CD4-positive, alpha-beta memory T cell (primary cell): ENCODE measurements at regions of chr2 and their contacts with region 1.

Region 1: DNA sequence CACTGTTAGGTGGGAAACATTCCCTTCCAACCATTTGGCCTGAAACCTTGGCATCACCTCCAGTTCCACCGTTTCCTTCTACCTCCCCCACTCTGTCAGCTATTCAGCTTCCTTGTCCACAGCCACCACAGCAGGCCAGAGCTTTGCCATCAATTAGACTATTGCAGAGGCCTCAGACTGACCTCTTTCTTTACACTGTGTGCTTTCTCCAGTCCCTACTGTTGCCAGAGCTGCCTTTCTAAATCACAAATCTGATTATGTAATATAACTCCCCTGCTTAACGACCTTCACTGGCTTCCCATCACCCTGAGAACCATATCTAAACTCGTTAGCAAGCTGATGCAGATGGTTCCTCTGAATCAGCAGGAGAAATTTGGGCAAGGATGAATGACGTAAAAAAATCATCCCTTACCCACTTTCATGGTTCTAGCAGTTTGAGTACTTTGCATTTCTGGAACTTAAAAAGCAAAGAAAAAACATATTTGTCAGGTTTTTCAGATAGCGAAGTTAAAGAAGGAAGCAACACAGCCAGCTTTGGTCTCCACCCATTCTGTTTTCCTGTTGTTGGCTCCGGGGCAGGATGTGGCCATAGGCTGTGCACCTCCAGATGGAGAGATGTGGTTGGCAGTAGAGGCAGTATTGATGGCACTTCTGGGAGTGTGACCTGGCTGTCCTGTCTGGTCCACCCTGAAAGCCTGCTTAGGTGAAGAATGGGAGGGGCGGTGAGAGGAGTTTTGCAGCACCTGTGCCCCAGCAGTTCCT is 422.1 kb downstream of the PARD3B start:
- DNase-seq: peak; percentile 64 to 78 (median 73)
- H3K4me3 ChIP-seq: peak overlapping the region in 1 of 2 donors; percentile 6
- H3K4me3 Mint-ChIP-seq: peak overlapping the region; percentile 12 to 86 (median 72)
- H3K27ac ChIP-seq: peak overlapping the region; percentile 48
- H3K27ac Mint-ChIP-seq: peak overlapping the region; percentile 83 to 100 (median 95)
- H3K4me1 ChIP-seq: peaks cover 72% of the 10 kb centered on the region
- H3K4me1 Mint-ChIP-seq: peaks cover 41 to 67% (median 57%) of the 10 kb centered on the region in 4 donors
- H3K27me3 ChIP-seq: no peaks in the 10 kb centered on the region
- H3K27me3 Mint-ChIP-seq: no peaks in the 10 kb centered on the region

Region 2: GRCh38 chr2:204885747-204886146 is 81.6 kb before region 1 on chr2:
- CTCF ChIA-PET with region 1: interaction called, 8 read pairs
- POLR2A ChIA-PET with region 1: interaction called, 41 read pairs
- intact Hi-C with region 1: loop called (anchors 2 kb)
- DNase-seq: no peak
- H3K4me3 ChIP-seq: no peak overlapping the region
- H3K4me3 Mint-ChIP-seq: no peak overlapping the region
- H3K27ac ChIP-seq: no peak overlapping the region
- H3K27ac Mint-ChIP-seq: peak overlapping the region in 1 of 7 donors; percentile 6
- H3K4me1 ChIP-seq: peaks cover 22% of the 10 kb centered on the region
- H3K4me1 Mint-ChIP-seq: peaks cover 17 to 43% (median 23%) of the 10 kb centered on the region in 4 donors
- H3K27me3 ChIP-seq: no peaks in the 10 kb centered on the region
- H3K27me3 Mint-ChIP-seq: no peaks in the 10 kb centered on the region

Region 3: DNA sequence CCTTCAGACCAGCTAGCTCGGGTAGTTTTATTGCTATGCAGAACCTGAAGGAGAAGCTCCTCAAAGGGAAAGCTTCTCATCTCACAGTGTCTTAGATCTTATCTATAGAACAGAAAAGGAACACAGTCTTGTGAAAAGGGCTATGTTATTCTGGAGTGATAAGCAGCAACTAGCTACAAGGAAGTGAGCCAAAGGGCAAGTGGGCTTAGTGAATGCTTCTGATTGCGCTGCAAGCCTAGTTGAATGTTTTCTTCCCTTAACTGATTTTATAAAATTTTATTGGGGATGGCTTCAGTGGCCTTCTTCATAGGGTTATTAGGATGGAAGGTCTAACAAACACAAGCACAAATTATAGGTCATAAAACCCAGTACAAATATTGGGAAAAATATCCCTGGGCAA is 22.0 kb before region 1 on chr2:
- CTCF ChIA-PET with region 1: interaction called, 3 read pairs
- POLR2A ChIA-PET with region 1: interaction called, 16 read pairs
- intact Hi-C with region 1: loop called (anchors 2 kb)
- DNase-seq: no peak
- H3K4me3 ChIP-seq: no peak overlapping the region
- H3K4me3 Mint-ChIP-seq: no peak overlapping the region
- H3K27ac ChIP-seq: no peak overlapping the region
- H3K27ac Mint-ChIP-seq: peak overlapping the region in 1 of 7 donors; percentile 51
- H3K4me1 ChIP-seq: peaks cover 26% of the 10 kb centered on the region
- H3K4me1 Mint-ChIP-seq: peaks cover 28 to 53% (median 37%) of the 10 kb centered on the region in 4 donors
- H3K27me3 ChIP-seq: no peaks in the 10 kb centered on the region
- H3K27me3 Mint-ChIP-seq: no peaks in the 10 kb centered on the region

Region 4: DNA sequence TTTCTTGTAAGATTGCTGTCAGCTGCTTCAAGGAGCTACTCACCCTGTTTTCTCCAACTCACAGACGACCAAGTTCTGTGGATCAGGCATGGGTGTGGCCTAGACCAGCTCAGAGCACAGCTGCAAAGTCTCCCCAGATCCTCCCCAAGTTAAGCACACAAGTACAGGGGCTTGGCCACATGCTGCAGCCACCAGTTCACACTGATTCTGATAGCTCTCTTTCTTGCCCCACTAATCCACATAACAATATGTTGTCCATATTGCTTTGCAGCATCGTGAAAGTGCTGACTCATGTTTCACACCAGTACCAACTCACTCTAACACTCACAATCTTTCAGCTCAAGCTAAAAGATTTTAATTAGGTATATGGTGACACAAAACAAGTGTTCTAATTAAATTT is 14.9 kb after region 1 on chr2:
- CTCF ChIA-PET with region 1: interaction called, 4 read pairs
- POLR2A ChIA-PET with region 1: interaction called, 10 read pairs
- intact Hi-C with region 1: no loop called
- DNase-seq: no peak
- H3K4me3 ChIP-seq: no peak overlapping the region
- H3K4me3 Mint-ChIP-seq: peak overlapping the region in 2 of 8 donors; percentile 2 to 38
- H3K27ac ChIP-seq: no peak overlapping the region
- H3K27ac Mint-ChIP-seq: no peak overlapping the region
- H3K4me1 ChIP-seq: peaks cover 14% of the 10 kb centered on the region
- H3K4me1 Mint-ChIP-seq: peaks cover 10 to 20% (median 11%) of the 10 kb centered on the region in 4 donors
- H3K27me3 ChIP-seq: no peaks in the 10 kb centered on the region
- H3K27me3 Mint-ChIP-seq: no peaks in the 10 kb centered on the region

Region 5: DNA sequence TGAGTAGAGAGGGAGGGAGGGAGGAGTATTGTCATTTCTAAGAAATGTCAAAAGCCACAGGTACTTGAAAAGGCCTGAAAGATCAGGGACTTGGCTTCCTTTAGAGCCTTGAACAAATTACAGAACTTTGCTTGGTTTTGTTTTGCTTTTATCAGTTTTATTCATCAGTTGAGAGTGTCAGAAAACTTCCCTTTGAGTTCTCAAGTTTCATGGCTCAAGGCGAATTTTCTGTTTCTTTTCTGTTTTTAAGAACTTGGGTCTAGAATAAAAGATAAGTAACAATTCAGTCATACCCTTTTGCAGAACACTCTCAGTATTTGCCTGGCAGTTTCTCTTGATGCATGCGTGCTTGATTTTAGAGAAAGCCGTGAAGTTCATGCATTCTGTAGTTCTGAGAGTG is 109.8 kb after region 1 on chr2:
- CTCF ChIA-PET with region 1: no interaction called
- POLR2A ChIA-PET with region 1: interaction called, 3 read pairs
- intact Hi-C with region 1: loop called (anchors 5 kb)
- DNase-seq: peak in 4 of 5 donors; percentile 36 to 60 (median 51)
- H3K4me3 ChIP-seq: peak overlapping the region in 1 of 2 donors; percentile 5
- H3K4me3 Mint-ChIP-seq: peak overlapping the region; percentile 51 to 73 (median 68)
- H3K27ac ChIP-seq: peak overlapping the region; percentile 38
- H3K27ac Mint-ChIP-seq: peak overlapping the region; percentile 65 to 92 (median 81)
- H3K4me1 ChIP-seq: peaks cover 47% of the 10 kb centered on the region
- H3K4me1 Mint-ChIP-seq: peaks cover 31 to 41% (median 35%) of the 10 kb centered on the region in 4 donors
- H3K27me3 ChIP-seq: no peaks in the 10 kb centered on the region
- H3K27me3 Mint-ChIP-seq: no peaks in the 10 kb centered on the region